ENCODE measurements at regions of chr3 and their contacts with region 1.

Region 1: GRCh38 chr3:75727985-75728384 is 57.4 kb downstream of the ZNF717 start:
- DNase-seq: no peak
- H3K4me3 Mint-ChIP-seq: no peak overlapping the region
- H3K27ac Mint-ChIP-seq: no peak overlapping the region
- H3K4me1 Mint-ChIP-seq: no peaks in the 10 kb centered on the region
- H3K27me3 Mint-ChIP-seq: no peaks in the 10 kb centered on the region

Region 2: GRCh38 chr3:75076481-75076880 is 651.5 kb before region 1 on chr3:
- intact Hi-C with region 1: no loop called
- DNase-seq: no peak
- H3K4me3 Mint-ChIP-seq: no peak overlapping the region
- H3K27ac Mint-ChIP-seq: no peak overlapping the region
- H3K4me1 Mint-ChIP-seq: no peaks in the 10 kb centered on the region
- H3K27me3 Mint-ChIP-seq: no peaks in the 10 kb centered on the region

Region 3: GRCh38 chr3:75144406-75144805 is 583.6 kb before region 1 on chr3:
- intact Hi-C with region 1: no loop called
- DNase-seq: no peak
- H3K4me3 Mint-ChIP-seq: no peak overlapping the region
- H3K27ac Mint-ChIP-seq: no peak overlapping the region
- H3K4me1 Mint-ChIP-seq: no peaks in the 10 kb centered on the region
- H3K27me3 Mint-ChIP-seq: no peaks in the 10 kb centered on the region

Region 4: GRCh38 chr3:75692061-75692460 is 35.9 kb before region 1 on chr3:
- intact Hi-C with region 1: no loop called
- DNase-seq: no peak
- H3K4me3 Mint-ChIP-seq: no peak overlapping the region
- H3K27ac Mint-ChIP-seq: no peak overlapping the region
- H3K4me1 Mint-ChIP-seq: no peaks in the 10 kb centered on the region
- H3K27me3 Mint-ChIP-seq: no peaks in the 10 kb centered on the region

Region 5: GRCh38 chr3:76044601-76045600 is 316.9 kb after region 1 on chr3:
- intact Hi-C with region 1: loop called (anchors 5 kb)
- DNase-seq: no peak
- H3K4me3 Mint-ChIP-seq: no peak overlapping the region
- H3K27ac Mint-ChIP-seq: no peak overlapping the region
- H3K4me1 Mint-ChIP-seq: no peaks in the 10 kb centered on the region
- H3K27me3 Mint-ChIP-seq: no peaks in the 10 kb centered on the region

Region 6: DNA sequence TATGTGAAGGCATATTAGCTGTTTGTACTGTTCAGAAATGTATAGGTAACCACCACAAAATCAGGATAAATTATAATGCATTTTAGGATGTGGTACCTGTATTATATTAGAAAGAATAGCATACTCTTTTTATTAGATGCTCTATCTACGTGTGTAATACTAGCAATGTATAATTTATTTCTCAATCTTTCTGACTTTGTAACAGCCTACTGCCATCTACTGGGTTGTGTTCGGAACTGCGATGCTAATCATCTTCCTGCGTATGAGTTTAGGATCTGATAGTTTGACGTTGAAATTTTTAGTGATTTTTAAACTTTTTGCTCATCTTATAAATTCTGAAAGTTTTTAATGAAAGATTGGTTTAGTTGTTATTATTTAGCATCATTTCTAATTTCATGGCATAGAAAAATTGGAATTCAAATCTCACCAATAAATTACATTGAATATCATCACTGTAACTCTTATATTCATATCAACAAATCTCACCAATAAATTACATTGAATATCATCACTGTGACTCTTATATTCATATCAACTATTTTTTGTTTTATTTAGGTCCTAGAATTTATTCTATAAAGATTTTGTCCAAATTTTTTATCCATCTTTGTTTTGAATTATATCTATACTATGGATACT is 380.1 kb after region 1 on chr3:
- intact Hi-C with region 1: loop called (anchors 5 kb)
- DNase-seq: no peak
- H3K4me3 Mint-ChIP-seq: no peak overlapping the region
- H3K27ac Mint-ChIP-seq: no peak overlapping the region
- H3K4me1 Mint-ChIP-seq: no peaks in the 10 kb centered on the region
- H3K27me3 Mint-ChIP-seq: no peaks in the 10 kb centered on the region